Activated T-helper 2 cell treated with anti-CD3 and anti-CD28 coated beads, Interferon-gamma antibody, Interleukin-2, Interleukin-4, amounts not matched to agents 10 μg/mL and 5 μg/mL and 100 μg/mL, durations not matched to agents 14 hours and 24 hours and 36 hours (primary cell): ENCODE measurements at regions of chr2 and their contacts with region 1.

Region 1: GRCh38 chr2:191114403-191114886 is 36.3 kb downstream of the STAT4 start:
- DNase-seq: peak; percentile 40
- H3K4me3 Mint-ChIP-seq: peak overlapping the region; percentile 64
- H3K27ac Mint-ChIP-seq: peak overlapping the region; percentile 94
- H3K4me1 Mint-ChIP-seq: peaks cover 76% of the 10 kb centered on the region
- H3K27me3 Mint-ChIP-seq: no peaks in the 10 kb centered on the region

Region 2: DNA sequence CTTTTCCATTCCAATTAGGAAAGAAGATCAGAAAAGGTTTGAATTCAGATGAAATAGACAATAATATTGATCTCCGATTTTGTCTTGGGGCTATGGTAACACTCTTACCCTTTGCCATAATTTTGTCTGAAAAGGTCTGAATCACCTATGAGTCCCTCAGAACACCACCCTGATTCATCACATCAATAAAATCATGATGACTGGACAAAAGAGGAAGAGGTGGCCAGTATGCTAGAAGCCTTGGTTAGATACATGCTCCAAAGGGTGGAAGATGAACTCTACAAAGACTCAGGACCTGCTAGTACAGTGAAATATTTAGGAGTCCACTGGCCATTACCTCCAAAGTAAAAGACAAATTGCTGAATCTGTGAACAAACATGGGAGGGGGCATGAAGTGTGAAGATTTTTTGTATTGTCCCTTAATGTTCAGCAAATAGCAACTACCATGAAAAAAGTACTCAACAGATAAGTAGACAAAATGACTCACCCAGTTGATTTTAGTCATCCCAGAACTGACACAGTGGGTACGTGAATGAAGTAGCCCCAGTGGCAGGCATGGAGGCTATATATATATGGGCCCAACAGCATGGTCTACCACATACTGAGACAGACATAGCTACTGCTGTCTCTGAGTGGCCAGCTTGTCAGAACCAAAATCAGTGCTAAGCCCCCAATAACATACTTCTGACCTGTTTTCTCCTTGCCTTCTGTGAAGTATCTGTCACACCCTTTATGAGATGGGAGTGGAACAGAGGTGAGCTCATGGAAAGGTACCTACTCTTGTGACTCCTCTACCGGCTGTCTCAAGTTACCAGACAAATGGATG is 270.4 kb before region 1 on chr2:
- intact Hi-C with region 1: loop called (anchors 5 kb)
- DNase-seq: peak; percentile 17
- H3K4me3 Mint-ChIP-seq: no peak overlapping the region
- H3K27ac Mint-ChIP-seq: peak overlapping the region; percentile 94
- H3K4me1 Mint-ChIP-seq: peaks cover 44% of the 10 kb centered on the region
- H3K27me3 Mint-ChIP-seq: no peaks in the 10 kb centered on the region

Region 3: DNA sequence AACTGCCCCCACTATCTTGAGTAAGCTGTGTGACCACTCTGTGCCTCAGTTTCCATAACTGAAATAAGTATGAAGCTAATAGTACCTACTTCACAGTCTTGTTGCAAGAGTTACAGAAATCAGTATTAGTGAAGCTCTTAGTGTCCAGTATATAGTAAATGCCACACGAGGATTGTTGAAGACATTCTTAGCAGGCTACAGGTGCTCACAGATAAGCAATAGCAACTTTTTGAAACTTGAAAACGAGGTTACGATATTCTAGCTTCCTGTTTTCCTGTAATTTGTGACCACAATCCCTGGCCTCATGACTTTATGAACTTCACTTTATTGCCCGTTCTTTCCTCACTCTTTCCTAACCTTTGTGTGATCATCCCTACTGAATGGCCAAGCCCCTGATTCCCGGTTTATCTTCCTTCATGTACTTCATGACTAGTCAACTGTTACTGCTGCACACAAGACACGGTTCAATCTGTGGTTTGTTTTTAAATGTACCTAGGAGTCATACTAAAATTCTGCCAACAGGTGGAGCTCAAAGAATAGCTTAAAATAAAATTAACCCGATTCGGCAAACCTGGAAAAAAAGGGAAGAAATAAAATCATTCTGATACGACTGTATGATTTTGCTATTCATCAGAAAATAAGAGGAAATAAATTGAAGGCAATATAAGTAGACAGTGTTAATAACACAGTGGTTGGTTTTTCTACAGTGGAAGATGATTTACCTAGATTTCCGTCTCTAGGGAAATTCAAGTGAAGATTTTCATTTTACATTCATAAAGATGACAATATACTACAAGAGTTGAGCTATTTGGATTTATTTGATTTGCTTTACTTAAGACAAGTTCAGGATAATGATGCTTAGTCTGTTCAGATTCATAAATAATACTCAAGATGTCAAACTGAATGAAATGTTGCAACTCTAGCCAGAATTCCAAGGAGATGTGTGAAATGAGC is 62.3 kb before region 1 on chr2:
- intact Hi-C with region 1: loop called (anchors 2 kb)
- DNase-seq: no peak
- H3K4me3 Mint-ChIP-seq: no peak overlapping the region
- H3K27ac Mint-ChIP-seq: no peak overlapping the region
- H3K4me1 Mint-ChIP-seq: peaks cover 21% of the 10 kb centered on the region
- H3K27me3 Mint-ChIP-seq: no peaks in the 10 kb centered on the region

Region 4: DNA sequence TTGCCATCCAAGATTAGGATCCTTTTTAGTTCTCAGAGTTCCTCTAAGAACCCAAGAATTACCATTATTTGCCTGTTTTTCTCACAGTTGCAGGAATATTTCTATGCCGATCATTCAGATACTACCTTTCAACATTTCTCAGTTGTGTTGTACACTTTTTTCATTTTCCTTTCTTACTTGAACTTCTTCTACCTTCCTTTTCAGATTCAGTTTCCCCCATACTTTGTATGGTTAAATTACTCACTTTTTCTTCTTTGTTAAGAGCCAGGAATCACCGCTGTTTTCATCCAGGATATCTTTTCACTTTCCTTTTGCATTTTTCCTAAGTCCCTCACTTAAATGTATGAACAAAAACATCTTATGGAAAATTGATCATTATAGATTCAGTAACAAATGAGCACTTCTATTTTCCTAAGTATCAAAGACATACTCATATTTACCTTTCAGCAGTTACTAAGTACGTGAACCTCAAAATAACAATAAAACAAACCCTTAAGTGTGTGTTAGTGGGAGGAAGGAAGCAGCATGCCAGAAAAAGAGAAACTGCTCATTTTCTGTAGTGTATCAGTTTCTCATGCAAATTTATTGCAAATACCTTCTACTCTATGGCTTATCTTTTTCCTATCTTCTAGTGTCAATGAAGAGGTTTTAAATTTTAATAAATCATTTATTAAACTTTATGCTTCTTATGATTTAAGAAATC is 36.1 kb before region 1 on chr2:
- intact Hi-C with region 1: loop called (anchors 1 kb)
- DNase-seq: no peak
- H3K4me3 Mint-ChIP-seq: peak overlapping the region; percentile 74
- H3K27ac Mint-ChIP-seq: peak overlapping the region; percentile 85
- H3K4me1 Mint-ChIP-seq: peaks cover 42% of the 10 kb centered on the region
- H3K27me3 Mint-ChIP-seq: no peaks in the 10 kb centered on the region

Region 5: GRCh38 chr2:191128172-191128910 is 13.9 kb after region 1 on chr2:
- intact Hi-C with region 1: loop called (anchors 1 kb)
- DNase-seq: no peak
- H3K4me3 Mint-ChIP-seq: no peak overlapping the region
- H3K27ac Mint-ChIP-seq: peak overlapping the region; percentile 71
- H3K4me1 Mint-ChIP-seq: peaks cover 62% of the 10 kb centered on the region
- H3K27me3 Mint-ChIP-seq: no peaks in the 10 kb centered on the region